Gastrocnemius medialis (tissue), 4 donors: ENCODE measurements at regions of chr3 and their contacts with region 1.

Region 1: DNA sequence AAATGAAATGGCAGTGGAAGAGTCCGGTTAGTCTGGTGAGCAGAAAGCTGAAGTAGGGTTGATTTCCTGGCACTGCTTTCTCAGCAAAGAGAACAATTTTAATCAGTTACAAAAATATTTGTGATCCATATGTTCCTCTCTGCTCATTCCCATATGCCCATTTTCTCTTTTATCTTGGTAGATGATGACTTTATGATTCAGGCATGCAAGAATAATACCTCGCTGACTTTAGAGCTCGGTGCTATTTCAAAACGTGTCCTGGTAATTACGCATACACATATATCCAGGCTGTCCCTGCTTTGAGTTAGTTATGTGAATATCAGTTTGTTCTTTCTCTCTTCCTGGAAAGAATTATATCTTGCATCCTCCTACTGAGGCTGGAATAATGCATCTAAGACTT is 38.5 kb downstream of the ARPP21 start:
- DNase-seq: no peak
- ATAC-seq: peak; percentile 52 to 55
- H3K4me3 ChIP-seq: peak overlapping the region in 2 of 4 donors; percentile 47 to 51
- H3K27ac ChIP-seq: peak overlapping the region; percentile 77 to 94 (median 83)
- H3K4me1 ChIP-seq: peaks cover 37 to 72% of the 10 kb centered on the region in 2 donors
- H3K27me3 ChIP-seq: no peaks in the 10 kb centered on the region
- CTCF ChIP-seq: no peak
- POLR2A ChIP-seq: no peak

Region 2: GRCh38 chr3:35592589-35593295 is 85.1 kb before region 1 on chr3:
- in situ Hi-C with region 1: no loop called
- intact Hi-C with region 1: no loop called
- DNase-seq: no peak
- ATAC-seq: no peak
- H3K4me3 ChIP-seq: no peak overlapping the region
- H3K27ac ChIP-seq: no peak overlapping the region
- H3K4me1 ChIP-seq: no peaks in the 10 kb centered on the region
- H3K27me3 ChIP-seq: no peaks in the 10 kb centered on the region
- CTCF ChIP-seq: no peak
- POLR2A ChIP-seq: no peak

Region 3: GRCh38 chr3:35639254-35640186 is 38.3 kb before region 1 on chr3 and contains the start of gene ARPP21:
- in situ Hi-C with region 1: no loop called
- intact Hi-C with region 1: loop called (anchors 2 kb)
- DNase-seq: peak; percentile 58 to 68
- ATAC-seq: peak; percentile 64 to 71
- H3K4me3 ChIP-seq: peak within 1 kb of the TSS; percentile 67 to 77 (median 74)
- H3K27ac ChIP-seq: peak within 1 kb of the TSS; percentile 88 to 94 (median 92)
- H3K4me1 ChIP-seq: no peaks in the 10 kb centered on the region
- H3K27me3 ChIP-seq: no peaks in the 10 kb centered on the region
- CTCF ChIP-seq: no peak
- POLR2A ChIP-seq: peak; percentile 59 to 77
- total RNA-seq, gene ARPP21: 58.7 to 93.8 (median 67.5) TPM

Region 4: GRCh38 chr3:35664460-35664919 is 13.3 kb before region 1 on chr3:
- in situ Hi-C with region 1: no loop called
- intact Hi-C with region 1: loop called (anchors 2 kb)
- DNase-seq: peak; percentile 80 to 94
- ATAC-seq: peak; percentile 77 to 81
- H3K4me3 ChIP-seq: peak overlapping the region; percentile 48 to 56 (median 52)
- H3K27ac ChIP-seq: peak overlapping the region; percentile 81 to 95 (median 94)
- H3K4me1 ChIP-seq: peaks cover 69 to 72% of the 10 kb centered on the region in 2 donors
- H3K27me3 ChIP-seq: no peaks in the 10 kb centered on the region
- CTCF ChIP-seq: no peak
- POLR2A ChIP-seq: peak in 1 of 2 donors; percentile 21

Region 5: GRCh38 chr3:35707904-35708303 is 30.1 kb after region 1 on chr3:
- in situ Hi-C with region 1: no loop called
- intact Hi-C with region 1: no loop called
- DNase-seq: no peak
- ATAC-seq: no peak
- H3K4me3 ChIP-seq: no peak overlapping the region
- H3K27ac ChIP-seq: no peak overlapping the region
- H3K4me1 ChIP-seq: no peaks in the 10 kb centered on the region
- H3K27me3 ChIP-seq: no peaks in the 10 kb centered on the region
- CTCF ChIP-seq: no peak
- POLR2A ChIP-seq: no peak